Gastrocnemius medialis (tissue), 4 donors: ENCODE measurements at regions of chr11 and their contacts with region 1.

Region 1: GRCh38 chr11:34344768-34345539 is 12.9 kb downstream of the ABTB2 start:
- DNase-seq: peak in 1 of 2 donors; percentile 33
- ATAC-seq: peak in 1 of 2 donors; percentile 3
- H3K4me3 ChIP-seq: no peak overlapping the region
- H3K27ac ChIP-seq: peak overlapping the region; percentile 84 to 93 (median 87)
- H3K4me1 ChIP-seq: peaks cover 74 to 76% of the 10 kb centered on the region in 2 donors
- H3K27me3 ChIP-seq: no peaks in the 10 kb centered on the region
- CTCF ChIP-seq: no peak
- POLR2A ChIP-seq: no peak

Region 2: DNA sequence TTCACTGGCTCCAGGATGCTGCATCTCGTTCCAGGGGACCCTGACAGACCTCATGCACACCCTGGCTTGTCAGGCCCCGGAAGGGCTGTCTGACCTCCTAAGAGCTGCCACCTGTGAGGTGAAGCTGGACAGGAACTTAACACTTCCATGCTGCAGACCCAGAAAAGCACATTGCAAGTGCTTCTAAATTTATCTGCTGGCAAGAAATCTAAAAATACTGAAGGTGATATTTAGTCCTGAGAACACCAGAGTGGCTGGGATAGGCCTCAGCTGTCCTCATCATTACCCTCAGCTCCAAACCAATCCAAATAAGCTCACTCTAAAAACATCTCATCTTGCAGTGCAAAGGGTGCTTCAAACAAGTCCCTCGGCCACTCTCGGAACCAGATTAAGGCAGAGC is 33.8 kb before region 1 on chr11:
- in situ Hi-C with region 1: no loop called
- intact Hi-C with region 1: loop called (anchors 2 kb)
- DNase-seq: peak; percentile 26 to 74
- ATAC-seq: peak; percentile 88 to 89
- H3K4me3 ChIP-seq: no peak overlapping the region
- H3K27ac ChIP-seq: peak overlapping the region; percentile 80 to 88 (median 84)
- H3K4me1 ChIP-seq: peaks cover 50 to 69% of the 10 kb centered on the region in 2 donors
- H3K27me3 ChIP-seq: no peaks in the 10 kb centered on the region
- CTCF ChIP-seq: no peak
- POLR2A ChIP-seq: peak in 1 of 2 donors; percentile 54

Region 3: GRCh38 chr11:34327804-34328631 is 16.9 kb before region 1 on chr11:
- in situ Hi-C with region 1: no loop called
- intact Hi-C with region 1: loop called (anchors 2 kb)
- DNase-seq: peak in 1 of 2 donors; percentile 67
- ATAC-seq: peak; percentile 61 to 75
- H3K4me3 ChIP-seq: no peak overlapping the region
- H3K27ac ChIP-seq: peak overlapping the region in 3 of 4 donors; percentile 19 to 42 (median 27)
- H3K4me1 ChIP-seq: peaks cover 64 to 68% of the 10 kb centered on the region in 2 donors
- H3K27me3 ChIP-seq: no peaks in the 10 kb centered on the region
- CTCF ChIP-seq: no peak
- POLR2A ChIP-seq: no peak